SK-N-SH (cell line): ENCODE measurements at regions of chr17 and their contacts with region 1.

Region 1: DNA sequence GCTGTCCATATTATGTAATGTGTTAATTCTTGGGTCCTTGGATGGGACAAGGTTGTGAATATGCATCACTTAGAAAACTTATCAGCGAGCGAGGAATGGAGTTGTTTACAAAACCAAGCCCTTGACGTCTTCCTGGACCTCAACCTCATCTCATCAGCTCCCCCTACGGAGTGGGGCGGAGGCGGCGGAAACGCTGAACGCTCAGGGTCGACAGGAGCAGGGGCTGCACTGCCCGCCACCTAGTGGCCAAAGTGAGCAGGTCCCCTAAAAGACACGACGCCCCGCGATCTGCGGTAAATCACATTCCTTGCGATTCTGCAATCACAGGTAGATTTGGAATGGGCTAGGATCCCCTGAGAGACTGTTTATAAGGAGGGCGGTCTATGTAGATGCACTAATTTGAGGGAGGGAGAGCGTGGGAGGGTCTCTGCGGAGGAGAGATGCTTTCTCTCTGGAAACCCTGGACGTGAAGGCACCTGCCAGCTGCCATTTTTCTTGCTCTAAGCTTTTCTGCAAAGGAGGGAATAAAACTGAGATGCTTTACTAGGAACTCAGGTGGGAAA is 5.4 kb upstream of the ICAM2 start:
- DNase-seq: peak; percentile 89
- H3K4me3 ChIP-seq: peak overlapping the region; percentile 18 to 19; a peak in 2 of 4 replicates
- H3K27ac ChIP-seq: no peak overlapping the region
- H3K4me1 ChIP-seq: no peaks in the 10 kb centered on the region
- H3K27me3 ChIP-seq: no peaks in the 10 kb centered on the region
- CTCF ChIP-seq: peak; percentile 99
- EP300 ChIP-seq: no peak
- RAD21 ChIP-seq: peak; percentile 76

Region 2: GRCh38 chr17:63859257-63859656 is 166.6 kb before region 1 on chr17:
- CTCF ChIA-PET with region 1: interaction called, 13 read pairs
- POLR2A ChIA-PET with region 1: no interaction called
- DNase-seq: no peak
- H3K4me3 ChIP-seq: no peak overlapping the region
- H3K27ac ChIP-seq: no peak overlapping the region
- H3K4me1 ChIP-seq: no peaks in the 10 kb centered on the region
- H3K27me3 ChIP-seq: peaks cover 31% of the 10 kb centered on the region
- CTCF ChIP-seq: no peak
- EP300 ChIP-seq: no peak
- RAD21 ChIP-seq: no peak

Region 3: GRCh38 chr17:63925645-63926044 is 100.2 kb before region 1 on chr17:
- CTCF ChIA-PET with region 1: interaction called, 214 read pairs
- POLR2A ChIA-PET with region 1: no interaction called
- DNase-seq: peak; percentile 25
- H3K4me3 ChIP-seq: no peak overlapping the region
- H3K27ac ChIP-seq: no peak overlapping the region
- H3K4me1 ChIP-seq: no peaks in the 10 kb centered on the region
- H3K27me3 ChIP-seq: no peaks in the 10 kb centered on the region
- CTCF ChIP-seq: no peak
- EP300 ChIP-seq: no peak
- RAD21 ChIP-seq: no peak

Region 4: GRCh38 chr17:63954402-63955063 is 71.3 kb before region 1 on chr17:
- CTCF ChIA-PET with region 1: interaction called, 18 read pairs
- POLR2A ChIA-PET with region 1: no interaction called
- DNase-seq: peak; percentile 61
- H3K4me3 ChIP-seq: no peak overlapping the region
- H3K27ac ChIP-seq: no peak overlapping the region
- H3K4me1 ChIP-seq: peaks cover 0 to 13% of the 10 kb centered on the region in 2 experiments; a peak in 1 of 4 replicates
- H3K27me3 ChIP-seq: peaks cover 6% of the 10 kb centered on the region; the same call in 1 of the 2 replicates
- CTCF ChIP-seq: no peak
- EP300 ChIP-seq: no peak
- RAD21 ChIP-seq: no peak

Region 5: GRCh38 chr17:64005734-64006167 is 20.1 kb before region 1 on chr17:
- CTCF ChIA-PET with region 1: interaction called, 32 read pairs
- POLR2A ChIA-PET with region 1: no interaction called
- DNase-seq: peak; percentile 76
- H3K4me3 ChIP-seq: no peak overlapping the region
- H3K27ac ChIP-seq: peak overlapping the region in 1 of 2 experiments; percentile 53; a peak in 1 of 4 replicates
- H3K4me1 ChIP-seq: peaks cover 0 to 22% of the 10 kb centered on the region in 2 experiments; a peak in 1 of 4 replicates
- H3K27me3 ChIP-seq: no peaks in the 10 kb centered on the region
- CTCF ChIP-seq: no peak
- EP300 ChIP-seq: no peak
- RAD21 ChIP-seq: no peak

Region 6: DNA sequence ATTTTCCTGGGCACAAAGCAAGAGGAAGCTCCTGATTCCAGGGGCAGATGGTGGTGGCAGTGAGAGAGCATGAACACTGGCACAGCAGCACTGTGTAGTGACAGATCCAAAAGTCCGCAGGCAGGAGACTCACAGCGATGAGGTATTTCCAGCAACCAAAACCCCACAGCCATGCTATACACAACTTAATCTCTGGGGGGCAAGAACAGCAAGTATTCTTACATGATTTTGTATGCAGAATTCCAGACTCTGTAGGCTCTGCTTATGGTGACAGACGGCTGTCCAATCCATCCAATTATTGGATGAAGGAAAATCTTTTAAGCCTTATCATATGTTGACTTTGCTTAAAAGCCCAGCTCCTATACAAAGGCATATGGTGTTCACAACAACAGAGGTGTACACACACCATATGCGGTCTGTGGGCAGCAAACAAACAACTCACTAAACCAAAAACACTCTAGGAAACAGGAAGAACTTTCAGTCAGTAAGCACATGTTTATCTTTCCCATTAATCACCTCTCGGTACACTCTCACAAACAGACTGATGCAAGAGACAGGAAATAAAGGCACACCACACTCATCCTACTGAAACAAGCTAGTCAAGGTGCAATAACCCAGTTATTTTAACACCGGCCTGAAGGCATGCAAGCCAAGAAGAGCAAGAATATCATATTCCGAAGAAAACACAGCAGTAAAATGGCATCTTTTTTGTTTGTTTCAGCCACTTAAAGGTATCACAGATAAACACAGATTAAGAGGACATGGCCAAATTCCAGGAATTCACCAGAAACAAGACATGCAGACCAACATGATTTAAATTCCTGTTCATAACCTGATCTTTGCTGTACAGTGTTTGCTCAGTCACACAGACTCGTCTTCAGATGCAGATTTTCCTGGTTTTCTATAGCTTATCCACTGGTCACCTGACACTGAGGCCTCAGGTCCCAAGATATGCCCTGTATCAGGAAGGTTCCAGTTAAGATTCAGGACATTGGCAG is 56.3 kb after region 1 on chr17:
- CTCF ChIA-PET with region 1: interaction called, 11 read pairs
- POLR2A ChIA-PET with region 1: no interaction called
- DNase-seq: peak; percentile 76
- H3K4me3 ChIP-seq: no peak overlapping the region
- H3K27ac ChIP-seq: peak overlapping the region; percentile 14 to 87; a peak in 3 of 4 replicates
- H3K4me1 ChIP-seq: peaks cover 12 to 26% of the 10 kb centered on the region in 2 experiments
- H3K27me3 ChIP-seq: no peaks in the 10 kb centered on the region
- CTCF ChIP-seq: peak; percentile 15; the same call in 1 of the 2 replicates
- EP300 ChIP-seq: no peak
- RAD21 ChIP-seq: peak; percentile 46

Region 7: DNA sequence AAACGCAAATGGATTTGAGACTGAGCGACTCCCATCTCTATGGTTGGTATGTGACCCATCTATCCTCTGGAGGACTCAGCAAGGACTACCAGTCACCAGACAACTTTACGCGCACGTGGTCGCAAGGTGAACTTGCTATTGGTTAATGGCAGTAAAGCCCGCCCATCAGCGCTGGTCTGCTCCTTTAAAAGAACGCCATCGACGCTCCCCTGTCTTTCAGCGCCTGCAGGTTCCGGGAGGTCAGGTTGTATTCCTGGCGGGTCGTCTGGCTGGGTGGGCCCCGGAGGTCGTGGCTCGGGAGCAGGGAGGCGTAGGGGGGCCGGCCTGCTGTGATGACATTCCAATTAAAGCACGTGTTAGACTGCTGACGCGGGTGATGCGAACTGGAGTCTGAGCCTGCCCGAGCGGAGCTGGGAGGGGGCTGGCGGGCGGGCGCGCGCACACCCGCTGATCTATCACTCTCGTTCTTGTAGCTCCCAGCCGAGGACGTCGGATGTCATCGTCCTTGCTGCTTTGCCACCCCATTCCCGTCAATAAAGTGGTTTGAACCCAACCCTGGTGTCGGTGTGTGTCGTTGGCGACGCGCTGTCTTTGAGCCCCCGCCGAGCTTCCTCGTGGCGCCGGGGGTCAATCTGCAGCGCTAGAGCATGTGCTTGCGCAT is 120.1 kb after region 1 on chr17:
- CTCF ChIA-PET with region 1: interaction called, 810 read pairs
- POLR2A ChIA-PET with region 1: interaction called, 4 read pairs
- DNase-seq: peak; percentile 96
- H3K4me3 ChIP-seq: peak overlapping the region; percentile 73 to 80
- H3K27ac ChIP-seq: peak overlapping the region; percentile 65 to 97
- H3K4me1 ChIP-seq: peaks cover 11 to 28% of the 10 kb centered on the region in 2 experiments
- H3K27me3 ChIP-seq: no peaks in the 10 kb centered on the region
- CTCF ChIP-seq: no peak; the same call in 1 of the 2 replicates
- EP300 ChIP-seq: no peak
- RAD21 ChIP-seq: no peak